ENCODE measurements at regions of chr1 and their contacts with region 1.

Region 1: GRCh38 chr1:48109390-48110013 is 112.3 kb upstream of the TRABD2B start:
- DNase-seq: peak in 1 of 5 donors; percentile 23
- H3K4me3 ChIP-seq: no peak overlapping the region
- H3K27ac ChIP-seq: no peak overlapping the region
- H3K4me1 ChIP-seq: peaks cover 1% of the 10 kb centered on the region
- H3K27me3 ChIP-seq: no peaks in the 10 kb centered on the region
- CTCF ChIP-seq: peak in 2 of 3 donors; percentile 35 to 50
- EP300 ChIP-seq: no peak
- POLR2A ChIP-seq: no peak

Region 2: DNA sequence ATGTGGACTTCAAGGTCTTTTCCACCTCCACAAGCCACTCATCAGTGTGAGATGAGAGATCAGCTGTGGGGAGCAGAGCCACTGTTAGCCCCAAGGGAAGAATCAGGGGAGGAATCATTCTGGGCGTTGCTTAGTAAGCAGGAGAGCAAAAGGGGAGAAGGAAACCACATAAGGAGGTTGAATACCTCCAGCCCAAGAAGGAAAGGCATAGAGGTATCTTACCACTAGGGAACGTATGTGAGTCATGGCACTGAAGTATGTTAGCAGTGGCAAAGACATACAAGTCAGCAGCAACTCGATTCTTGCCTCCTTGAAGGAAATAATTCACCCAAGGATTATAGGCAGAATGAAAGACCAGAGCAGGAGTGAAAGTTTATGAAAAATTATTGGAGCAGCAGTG is 81.4 kb after region 1 on chr1:
- intact Hi-C with region 1: no loop called
- DNase-seq: no peak
- H3K4me3 ChIP-seq: no peak overlapping the region
- H3K27ac ChIP-seq: no peak overlapping the region
- H3K4me1 ChIP-seq: no peaks in the 10 kb centered on the region
- H3K27me3 ChIP-seq: no peaks in the 10 kb centered on the region
- CTCF ChIP-seq: no peak
- EP300 ChIP-seq: no peak
- POLR2A ChIP-seq: no peak

Region 3: GRCh38 chr1:48498096-48498791 is 388.7 kb after region 1 on chr1:
- intact Hi-C with region 1: loop called in 2 of 4 experiments (anchors 5 to 10 kb)
- DNase-seq: peak; percentile 69 to 88 (median 82)
- H3K4me3 ChIP-seq: no peak overlapping the region
- H3K27ac ChIP-seq: no peak overlapping the region
- H3K4me1 ChIP-seq: peaks cover 7% of the 10 kb centered on the region
- H3K27me3 ChIP-seq: no peaks in the 10 kb centered on the region
- CTCF ChIP-seq: peak; percentile 59 to 72 (median 71)
- EP300 ChIP-seq: no peak
- POLR2A ChIP-seq: no peak